ENCODE measurements at regions of chr1 and their contacts with region 1.

Region 1: DNA sequence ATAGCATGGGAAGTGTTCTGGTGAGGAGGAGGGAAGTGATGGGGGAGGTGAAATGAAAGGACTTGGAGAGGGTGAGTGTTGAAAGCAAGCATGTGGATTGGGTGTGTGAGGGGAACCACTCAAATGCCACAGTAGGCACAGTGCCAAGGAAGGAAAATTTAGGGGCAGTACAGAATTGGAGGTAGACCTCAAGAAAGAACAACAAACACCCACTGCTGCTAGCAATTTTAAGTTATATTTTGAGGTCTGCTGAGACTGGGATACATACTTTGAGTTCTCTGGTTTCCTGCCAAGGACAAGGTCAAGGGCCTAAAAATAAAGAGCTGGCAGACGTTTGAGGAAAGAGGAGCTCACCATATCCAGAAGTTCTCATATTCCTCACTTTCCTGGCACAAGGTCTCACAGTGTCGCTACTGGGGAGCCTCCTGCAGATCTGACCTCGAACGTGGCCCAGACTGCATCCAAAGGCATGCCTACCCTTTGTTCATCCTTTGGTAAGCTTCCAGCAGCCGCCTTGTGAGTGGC is 104.0 kb downstream of the BRINP2 start:
- DNase-seq: no peak
- CTCF ChIP-seq: no peak

Region 2: GRCh38 chr1:177243773-177244172 is 31.0 kb before region 1 on chr1:
- CTCF ChIA-PET with region 1: no interaction called
- POLR2A ChIA-PET with region 1: no interaction called
- DNase-seq: no peak
- CTCF ChIP-seq: no peak

Region 3: GRCh38 chr1:177256153-177257075 is 18.3 kb before region 1 on chr1:
- CTCF ChIA-PET with region 1: interaction called, 25 read pairs
- POLR2A ChIA-PET with region 1: no interaction called
- DNase-seq: peak; percentile 46
- CTCF ChIP-seq: peak; percentile 39